ENCODE measurements at regions of chr1 and their contacts with region 1.

Region 1: DNA sequence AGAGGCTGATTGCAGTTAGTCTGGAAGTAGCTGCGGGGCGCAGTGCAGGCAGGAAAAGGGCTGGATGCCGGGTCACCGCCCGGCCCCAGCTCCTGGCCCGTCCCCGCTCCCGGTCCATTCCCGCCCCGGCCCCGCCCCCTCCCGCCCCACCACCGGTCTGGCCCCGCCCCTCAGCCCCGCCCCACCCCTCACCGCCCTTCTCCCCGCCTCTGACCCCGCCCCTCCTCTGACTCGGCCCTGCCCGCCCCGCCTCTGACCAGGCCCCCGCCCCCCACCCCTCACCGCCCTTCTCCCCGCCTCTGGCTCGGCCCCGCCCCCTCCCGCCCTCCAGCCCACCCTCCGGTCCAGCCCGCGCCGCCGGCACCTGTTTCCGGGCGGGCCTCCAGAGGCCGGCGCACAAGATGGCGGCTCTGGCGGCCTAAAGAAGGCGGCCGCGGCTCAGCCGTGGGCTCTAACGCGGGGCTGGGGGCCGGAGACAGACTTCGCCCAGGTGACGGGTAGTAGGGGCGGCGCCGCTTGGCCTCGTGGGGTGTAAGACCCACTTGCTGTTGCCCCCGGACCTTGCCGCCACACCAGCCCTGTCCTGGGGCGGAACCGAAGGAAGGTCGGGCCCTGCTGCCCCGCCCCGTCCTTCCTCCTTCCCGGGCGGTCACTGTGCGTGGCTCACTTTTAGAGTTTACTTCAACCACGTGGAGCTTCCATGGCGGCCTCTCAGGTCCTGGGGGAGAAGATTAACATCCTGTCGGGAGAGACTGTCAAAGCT is at the start of gene UBIAD1:
- DNase-seq: peak; percentile 66
- ATAC-seq: peak; percentile 89
- H3K4me3 ChIP-seq: peak within 1 kb of the TSS; percentile 78 to 95 (median 83)
- H3K27ac ChIP-seq: peak within 1 kb of the TSS; percentile 98
- H3K4me1 ChIP-seq: peaks cover 56% of the 10 kb centered on the region
- H3K27me3 ChIP-seq: no peaks in the 10 kb centered on the region; a peak in 1 of 5 replicates
- CTCF ChIP-seq: peak; percentile 43; the same call in 1 of the 2 replicates
- EP300 ChIP-seq: no peak
- POLR2A ChIP-seq: peak; percentile 50 to 72; a peak in 3 of 4 replicates
- RAD21 ChIP-seq: peak; percentile 62; the same call in 1 of the 2 replicates
- total RNA-seq, gene UBIAD1: 12.5 and 16.9 TPM in 2 replicates

Region 2: DNA sequence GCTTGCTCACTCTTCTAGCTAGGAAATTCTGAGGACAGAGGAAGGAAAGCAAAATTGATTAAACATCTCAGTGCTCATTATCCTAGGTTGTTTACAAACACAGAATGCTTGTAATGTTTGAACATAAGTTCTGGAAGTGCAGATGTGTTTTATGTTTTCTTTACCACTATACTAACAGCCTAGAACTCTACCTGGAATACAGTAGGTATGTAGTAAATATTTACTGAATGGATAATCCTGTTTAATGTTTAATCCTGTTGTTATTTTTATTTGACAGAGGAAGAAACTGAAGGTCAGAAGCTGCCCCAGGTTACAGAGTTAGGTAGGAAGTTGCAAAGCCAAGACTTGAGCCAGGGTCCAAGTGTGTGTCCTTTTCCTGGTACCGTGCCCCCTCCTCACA is 16.7 kb before region 1 on chr1:
- CTCF ChIA-PET with region 1: no interaction called
- POLR2A ChIA-PET with region 1: interaction called, 89 read pairs
- in situ Hi-C with region 1: no loop called
- intact Hi-C with region 1: no loop called
- DNase-seq: no peak
- ATAC-seq: peak; percentile 45; the same call in 1 of the 3 replicates
- H3K4me3 ChIP-seq: no peak overlapping the region
- H3K27ac ChIP-seq: peak overlapping the region; percentile 49
- H3K4me1 ChIP-seq: peaks cover 22% of the 10 kb centered on the region
- H3K27me3 ChIP-seq: no peaks in the 10 kb centered on the region
- CTCF ChIP-seq: no peak
- EP300 ChIP-seq: peak in 1 of 2 experiments; percentile 23; a peak in 1 of 4 replicates
- POLR2A ChIP-seq: no peak
- RAD21 ChIP-seq: no peak

Region 3: DNA sequence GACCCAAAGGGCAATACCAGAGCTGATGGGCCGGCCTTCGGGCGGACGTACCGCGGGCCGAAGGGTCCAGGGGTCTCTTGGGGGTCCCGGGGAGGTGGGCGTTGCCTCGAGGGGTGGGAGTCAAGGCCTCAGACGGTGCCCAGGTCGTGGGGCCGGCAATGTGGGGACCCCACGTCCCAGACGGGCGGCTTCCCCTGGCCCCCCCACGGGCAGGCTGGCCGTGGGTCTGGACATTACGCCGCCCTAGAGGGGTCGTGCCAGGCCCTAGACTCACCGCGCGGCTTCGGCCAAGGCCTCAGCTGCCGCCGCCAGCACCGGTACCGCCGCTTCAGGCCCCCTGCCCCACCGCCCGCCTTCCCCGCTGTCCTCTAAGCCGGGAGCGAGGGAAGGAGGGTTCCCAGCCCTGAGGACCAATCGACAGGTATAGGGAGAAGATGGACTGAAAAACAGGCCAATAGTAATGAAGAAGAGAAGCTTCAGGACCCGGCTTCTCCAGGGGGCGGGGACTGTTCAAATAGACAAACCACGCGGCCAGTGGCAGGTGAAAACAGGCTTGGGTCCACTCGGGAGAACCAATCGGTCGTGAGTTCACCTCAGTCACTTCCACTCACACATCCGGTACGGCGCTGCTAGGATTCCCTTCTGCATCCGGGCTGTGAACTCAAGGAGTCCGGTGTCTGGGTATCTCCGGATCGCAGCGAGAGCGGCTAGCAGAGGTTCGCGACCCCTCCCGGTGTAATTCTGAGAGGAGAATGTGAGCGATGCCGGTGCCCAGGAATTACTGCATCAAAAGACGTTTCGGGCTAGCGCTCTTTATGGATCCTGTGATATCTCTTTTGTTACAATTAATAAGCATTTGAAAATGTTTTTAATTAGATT is 10.6 kb before region 1 on chr1 and contains the start of gene MTOR:
- CTCF ChIA-PET with region 1: no interaction called
- POLR2A ChIA-PET with region 1: interaction called, 89 read pairs
- in situ Hi-C with region 1: no loop called
- intact Hi-C with region 1: no loop called
- DNase-seq: peak; percentile 99
- ATAC-seq: peak; percentile 98
- H3K4me3 ChIP-seq: peak within 1 kb of the TSS; percentile 83 to 91 (median 85)
- H3K27ac ChIP-seq: peak within 1 kb of the TSS; percentile 76
- H3K4me1 ChIP-seq: peaks cover 33% of the 10 kb centered on the region
- H3K27me3 ChIP-seq: no peaks in the 10 kb centered on the region
- CTCF ChIP-seq: peak; percentile 52
- EP300 ChIP-seq: peak in 1 of 2 experiments; percentile 47; a peak in 2 of 4 replicates
- POLR2A ChIP-seq: peak; percentile 50 to 68; a peak in 3 of 4 replicates
- RAD21 ChIP-seq: no peak
- total RNA-seq, gene MTOR: 34.6 and 42.8 TPM in 2 replicates

Region 4: GRCh38 chr1:11285883-11286734 is 13.1 kb after region 1 on chr1:
- CTCF ChIA-PET with region 1: no interaction called
- POLR2A ChIA-PET with region 1: interaction called, 20 read pairs
- in situ Hi-C with region 1: no loop called
- intact Hi-C with region 1: no loop called
- DNase-seq: no peak
- ATAC-seq: no peak
- H3K4me3 ChIP-seq: no peak overlapping the region
- H3K27ac ChIP-seq: no peak overlapping the region
- H3K4me1 ChIP-seq: no peaks in the 10 kb centered on the region
- H3K27me3 ChIP-seq: no peaks in the 10 kb centered on the region
- CTCF ChIP-seq: 0 out of 2 replicates have a peak, but pooled peaks have one; percentile 17
- EP300 ChIP-seq: no peak
- POLR2A ChIP-seq: no peak
- RAD21 ChIP-seq: no peak